Right cardiac atrium (tissue), 5 donors: ENCODE measurements at regions of chr1 and their contacts with region 1.

Region 1: GRCh38 chr1:182084487-182085316 is 23.2 kb upstream of the ZNF648 start:
- DNase-seq: peak; percentile 80 to 95 (median 92)
- ATAC-seq: peak; percentile 91 to 94
- H3K4me3 ChIP-seq: no peak overlapping the region
- H3K27ac ChIP-seq: no peak overlapping the region
- H3K4me1 ChIP-seq: no peaks in the 10 kb centered on the region
- H3K27me3 ChIP-seq: no peaks in the 10 kb centered on the region

Region 2: GRCh38 chr1:182029379-182030331 is 55.0 kb before region 1 on chr1:
- intact Hi-C with region 1: no loop called
- DNase-seq: peak; percentile 96 to 98 (median 98)
- ATAC-seq: peak; percentile 99 to 100
- H3K4me3 ChIP-seq: peak overlapping the region; percentile 73
- H3K27ac ChIP-seq: peak overlapping the region; percentile 9
- H3K4me1 ChIP-seq: no peaks in the 10 kb centered on the region
- H3K27me3 ChIP-seq: no peaks in the 10 kb centered on the region

Region 3: GRCh38 chr1:182397771-182398393 is 313.2 kb after region 1 on chr1:
- intact Hi-C with region 1: loop called in 3 of 4 experiments (anchors 2 to 5 kb)
- DNase-seq: peak in 1 of 3 donors; percentile 50
- ATAC-seq: no peak
- H3K4me3 ChIP-seq: no peak overlapping the region
- H3K27ac ChIP-seq: no peak overlapping the region
- H3K4me1 ChIP-seq: no peaks in the 10 kb centered on the region
- H3K27me3 ChIP-seq: no peaks in the 10 kb centered on the region

Region 4: GRCh38 chr1:182588500-182589452 is 504.1 kb after region 1 on chr1 and contains the start of gene RNASEL:
- intact Hi-C with region 1: loop called in 1 of 4 experiments (anchors 10 kb)
- DNase-seq: peak; percentile 80 to 89 (median 87)
- ATAC-seq: peak; percentile 94 to 95
- H3K4me3 ChIP-seq: peak within 1 kb of the TSS; percentile 66
- H3K27ac ChIP-seq: peak within 1 kb of the TSS; percentile 68
- H3K4me1 ChIP-seq: peaks cover 3% of the 10 kb centered on the region
- H3K27me3 ChIP-seq: no peaks in the 10 kb centered on the region
- total RNA-seq, gene RNASEL: 3.7 to 5.7 (median 5.4) TPM

Region 5: GRCh38 chr1:182789138-182790076 is 704.7 kb after region 1 on chr1 and contains the start of gene NPL:
- intact Hi-C with region 1: loop called in 1 of 4 experiments (anchors 10 kb)
- DNase-seq: peak; percentile 85 to 95 (median 94)
- ATAC-seq: peak; percentile 98
- H3K4me3 ChIP-seq: peak within 1 kb of the TSS; percentile 51
- H3K27ac ChIP-seq: no peak within 1 kb of the TSS
- H3K4me1 ChIP-seq: no peaks in the 10 kb centered on the region
- H3K27me3 ChIP-seq: no peaks in the 10 kb centered on the region
- total RNA-seq, gene NPL: 5.8 to 9.6 (median 9.4) TPM